ENCODE measurements at regions of chr14 and their contacts with region 1.

Region 1: GRCh38 chr14:30005114-30005808 is 77.6 kb upstream of the PRKD1 start:
- DNase-seq: peak in 4 of 7 donors; percentile 16 to 26 (median 19)
- H3K4me3 ChIP-seq: peak overlapping the region in 1 of 4 donors; percentile 13
- H3K27ac ChIP-seq: no peak overlapping the region
- H3K4me1 ChIP-seq: peaks cover 4 to 10% of the 10 kb centered on the region in 2 donors
- H3K27me3 ChIP-seq: no peaks in the 10 kb centered on the region
- CTCF ChIP-seq: peak; percentile 62 to 92 (median 79)
- POLR2A ChIP-seq: no peak

Region 2: GRCh38 chr14:29222671-29223268 is 782.5 kb before region 1 on chr14:
- intact Hi-C with region 1: no loop called
- DNase-seq: peak; percentile 13 to 49 (median 20)
- H3K4me3 ChIP-seq: no peak overlapping the region
- H3K27ac ChIP-seq: no peak overlapping the region
- H3K4me1 ChIP-seq: peaks cover 0 to 5% of the 10 kb centered on the region in 2 donors
- H3K27me3 ChIP-seq: no peaks in the 10 kb centered on the region
- CTCF ChIP-seq: peak; percentile 25 to 50 (median 40)
- POLR2A ChIP-seq: no peak

Region 3: DNA sequence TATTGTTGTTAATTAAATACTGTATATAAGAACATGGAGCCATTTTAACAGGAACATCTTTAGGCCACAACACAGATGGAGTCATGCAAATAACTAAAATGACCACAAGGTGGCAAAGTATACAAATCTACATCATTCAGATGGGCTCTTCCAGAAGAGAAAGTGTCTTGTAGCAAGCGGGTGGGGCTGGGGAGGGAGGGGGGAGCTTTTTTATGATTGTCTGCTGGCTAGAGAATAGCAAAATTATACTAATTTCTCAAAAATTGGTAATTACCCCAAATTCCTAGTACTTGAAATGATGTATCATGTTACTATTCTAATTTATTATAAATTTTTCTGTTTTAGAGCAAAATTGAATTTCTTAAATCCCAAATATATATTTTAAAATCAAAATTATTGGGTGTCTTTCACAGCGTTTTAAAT is 456.3 kb before region 1 on chr14:
- intact Hi-C with region 1: loop called (anchors 5 kb)
- DNase-seq: peak in 6 of 7 donors; percentile 9 to 61 (median 18)
- H3K4me3 ChIP-seq: no peak overlapping the region
- H3K27ac ChIP-seq: no peak overlapping the region
- H3K4me1 ChIP-seq: peaks cover 8 to 11% of the 10 kb centered on the region in 2 donors
- H3K27me3 ChIP-seq: no peaks in the 10 kb centered on the region
- CTCF ChIP-seq: peak; percentile 49 to 67 (median 60)
- POLR2A ChIP-seq: no peak

Region 4: DNA sequence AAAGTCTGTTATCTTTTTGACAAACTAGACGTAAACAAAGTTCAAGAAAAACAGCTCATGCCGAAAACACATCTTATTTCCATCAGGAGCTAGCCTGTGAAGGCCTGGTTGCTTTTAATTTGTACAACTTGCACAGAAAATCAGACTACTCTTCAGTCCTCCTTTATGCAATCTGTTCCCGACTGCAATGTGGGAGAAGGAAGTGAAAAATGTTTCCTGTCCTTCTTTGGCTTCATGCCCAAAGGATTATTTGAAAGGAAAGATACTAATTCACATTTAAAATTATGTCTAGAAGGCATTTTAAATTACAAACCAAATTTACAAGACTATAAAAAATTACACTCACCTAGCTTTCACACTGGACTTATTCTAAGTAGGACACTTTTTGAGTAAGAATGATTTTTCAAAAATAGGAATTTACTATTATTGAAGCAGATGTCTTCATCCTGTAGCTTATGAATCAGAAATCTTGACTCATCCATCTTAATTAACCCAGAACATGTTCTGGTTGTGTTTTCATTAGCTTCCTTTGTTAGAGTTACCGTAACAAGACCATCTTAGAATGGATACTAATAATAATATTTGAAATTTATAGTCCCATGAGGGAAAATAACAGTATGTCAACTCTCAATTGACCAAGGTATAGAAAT is 350.2 kb before region 1 on chr14:
- intact Hi-C with region 1: no loop called
- DNase-seq: no peak
- H3K4me3 ChIP-seq: no peak overlapping the region
- H3K27ac ChIP-seq: peak overlapping the region in 1 of 5 donors; percentile 6
- H3K4me1 ChIP-seq: peaks cover 12 to 38% of the 10 kb centered on the region in 2 donors
- H3K27me3 ChIP-seq: no peaks in the 10 kb centered on the region
- CTCF ChIP-seq: no peak
- POLR2A ChIP-seq: no peak

Region 5: GRCh38 chr14:29741909-29742401 is 263.3 kb before region 1 on chr14:
- intact Hi-C with region 1: no loop called
- DNase-seq: peak; percentile 50 to 85 (median 70)
- H3K4me3 ChIP-seq: peak overlapping the region in 1 of 4 donors; percentile 15
- H3K27ac ChIP-seq: peak overlapping the region; percentile 7 to 82 (median 42)
- H3K4me1 ChIP-seq: peaks cover 25 to 47% of the 10 kb centered on the region in 2 donors
- H3K27me3 ChIP-seq: no peaks in the 10 kb centered on the region
- CTCF ChIP-seq: no peak
- POLR2A ChIP-seq: no peak

Region 6: DNA sequence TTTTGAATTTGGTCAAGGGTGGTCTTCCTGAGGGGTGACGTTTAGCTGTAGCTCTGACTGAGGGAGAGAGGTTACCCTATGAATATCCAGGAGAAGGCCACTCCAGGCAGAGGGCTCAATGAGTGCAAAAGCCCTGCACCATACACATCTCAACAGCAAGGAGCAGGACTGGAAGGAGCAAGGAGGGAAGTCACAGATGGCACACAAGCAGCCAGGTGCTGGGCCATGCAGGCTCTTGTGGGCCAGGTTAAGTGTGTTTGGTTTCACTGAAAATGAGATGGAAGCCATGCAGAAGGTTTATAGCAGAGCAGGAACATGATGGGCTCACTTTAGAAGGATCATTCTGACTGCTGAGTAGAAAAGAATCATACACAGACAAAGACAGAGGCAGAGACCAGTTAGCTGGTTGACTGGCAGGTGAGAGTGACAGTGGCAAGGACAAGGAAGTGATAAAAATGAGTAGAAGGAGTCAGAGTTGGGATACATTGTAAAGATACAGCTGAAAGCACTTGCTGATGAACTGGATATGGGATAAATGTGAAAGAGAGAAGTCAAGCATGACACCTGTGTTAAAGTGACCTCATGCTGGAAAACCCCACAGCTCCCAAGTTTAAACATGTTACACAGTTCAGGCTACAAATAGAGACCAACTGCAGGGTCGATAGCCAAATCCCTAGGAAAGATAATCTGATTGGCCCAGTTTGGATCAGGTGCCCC is 158.8 kb before region 1 on chr14:
- intact Hi-C with region 1: no loop called
- DNase-seq: no peak
- H3K4me3 ChIP-seq: no peak overlapping the region
- H3K27ac ChIP-seq: no peak overlapping the region
- H3K4me1 ChIP-seq: no peaks in the 10 kb centered on the region
- H3K27me3 ChIP-seq: no peaks in the 10 kb centered on the region
- CTCF ChIP-seq: no peak
- POLR2A ChIP-seq: no peak